AG04449 (cell line): ENCODE measurements at regions of chr11 and their contacts with region 1.

Region 1: GRCh38 chr11:117817368-117818040 is 7.0 kb downstream of the FXYD2 start:
- DNase-seq: no peak
- H3K4me3 ChIP-seq: no peak overlapping the region
- CTCF ChIP-seq: peak; percentile 94

Region 2: DNA sequence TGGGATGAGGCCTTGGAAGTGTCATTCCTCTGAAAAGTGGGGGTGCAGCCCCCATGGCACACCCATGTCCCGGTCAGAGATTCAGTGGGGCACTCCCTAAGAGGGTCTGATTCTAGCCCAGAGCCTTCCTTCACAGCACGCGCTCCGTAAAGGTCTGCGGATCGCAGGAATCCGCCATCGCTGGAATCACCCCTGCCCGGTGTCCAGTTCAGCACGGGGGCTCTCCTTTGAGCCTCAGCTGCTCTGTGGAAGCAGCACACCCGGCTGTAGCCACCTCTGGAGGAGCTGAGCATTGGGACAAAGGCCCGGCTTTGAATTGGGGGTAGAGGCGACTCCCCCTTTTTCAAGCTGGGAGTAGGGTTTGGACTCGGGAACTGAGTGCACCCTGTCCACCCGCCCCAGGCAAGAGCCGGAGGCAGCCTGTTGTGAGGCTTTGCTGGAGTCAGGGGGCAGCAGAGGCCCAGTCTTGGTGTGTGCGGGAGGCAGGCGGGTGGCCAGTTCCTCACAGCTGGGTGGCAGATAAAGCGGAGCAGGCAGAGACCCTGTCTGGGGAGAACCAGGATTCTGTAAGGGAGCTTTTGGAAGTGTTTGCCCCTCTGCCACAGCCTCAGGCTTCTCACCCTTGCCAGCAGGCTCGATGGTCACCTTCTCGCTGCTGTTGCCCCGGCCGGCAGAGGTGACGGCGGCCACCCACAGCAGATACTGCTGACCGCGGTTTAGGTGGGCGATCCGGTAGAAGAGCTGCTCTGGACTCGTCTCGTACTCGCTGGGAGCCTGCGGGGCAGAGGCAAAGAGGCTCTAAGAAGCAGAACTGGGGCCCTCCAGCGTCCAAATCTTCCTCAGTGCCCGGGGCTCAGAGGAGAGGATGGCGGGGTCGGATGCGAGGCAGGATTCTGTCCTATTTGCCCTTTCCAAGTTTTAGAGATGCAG is 374.0 kb before region 1 on chr11:
- CTCF ChIA-PET with region 1: interaction called, 16 read pairs
- POLR2A ChIA-PET with region 1: no interaction called
- DNase-seq: no peak
- H3K4me3 ChIP-seq: no peak overlapping the region
- CTCF ChIP-seq: peak; percentile 62

Region 3: DNA sequence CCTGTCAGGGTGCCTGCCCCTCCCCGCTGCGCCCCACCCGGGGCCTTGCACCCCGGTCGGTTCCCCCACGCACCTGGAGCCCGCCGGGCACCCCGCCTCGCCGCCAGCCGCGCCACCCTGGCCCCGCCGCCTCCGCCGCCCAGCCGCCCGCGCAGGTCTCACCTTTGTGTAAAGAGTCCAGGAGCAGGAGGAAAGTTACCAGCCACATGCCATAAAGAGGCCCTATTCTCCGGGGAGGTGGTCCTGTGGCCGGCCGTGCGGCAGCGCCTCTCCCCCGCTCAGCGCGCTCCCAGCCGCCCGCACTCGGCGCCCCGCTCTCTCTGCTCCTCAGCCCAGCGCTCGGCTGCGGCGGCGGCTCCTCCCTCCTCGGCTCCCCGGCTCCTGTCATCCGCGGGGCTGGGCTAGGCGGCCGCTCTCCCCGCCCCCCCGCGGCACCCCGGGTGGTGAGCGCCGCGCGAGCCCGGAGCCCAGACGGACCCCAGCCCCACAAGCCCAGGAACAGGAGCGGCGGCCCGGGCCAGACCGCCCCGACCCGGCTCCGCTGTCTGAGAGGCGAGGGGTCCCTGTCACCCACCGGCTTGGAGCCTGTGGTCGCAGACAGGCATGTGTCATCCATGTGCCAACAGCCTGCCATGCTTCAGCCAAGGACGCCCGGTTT is 20.5 kb before region 1 on chr11 and contains the start of gene DSCAML1:
- CTCF ChIA-PET with region 1: interaction called, 316 read pairs
- POLR2A ChIA-PET with region 1: no interaction called
- DNase-seq: no peak
- H3K4me3 ChIP-seq: no peak within 1 kb of the TSS
- CTCF ChIP-seq: no peak

Region 4: GRCh38 chr11:117828611-117829368 is 11.3 kb after region 1 on chr11:
- CTCF ChIA-PET with region 1: interaction called, 82 read pairs
- POLR2A ChIA-PET with region 1: no interaction called
- DNase-seq: no peak
- H3K4me3 ChIP-seq: no peak overlapping the region
- CTCF ChIP-seq: no peak

Region 5: GRCh38 chr11:117885777-117886176 is 68.3 kb after region 1 on chr11:
- CTCF ChIA-PET with region 1: interaction called, 12 read pairs
- POLR2A ChIA-PET with region 1: no interaction called
- DNase-seq: no peak
- H3K4me3 ChIP-seq: no peak overlapping the region
- CTCF ChIP-seq: no peak

Region 6: GRCh38 chr11:118051611-118052461 is 234.3 kb after region 1 on chr11:
- CTCF ChIA-PET with region 1: interaction called, 75 read pairs
- POLR2A ChIA-PET with region 1: no interaction called
- DNase-seq: no peak
- H3K4me3 ChIP-seq: no peak overlapping the region
- CTCF ChIP-seq: no peak